A549 (cell line): ENCODE measurements at regions of chr7 and their contacts with region 1.

Region 1: DNA sequence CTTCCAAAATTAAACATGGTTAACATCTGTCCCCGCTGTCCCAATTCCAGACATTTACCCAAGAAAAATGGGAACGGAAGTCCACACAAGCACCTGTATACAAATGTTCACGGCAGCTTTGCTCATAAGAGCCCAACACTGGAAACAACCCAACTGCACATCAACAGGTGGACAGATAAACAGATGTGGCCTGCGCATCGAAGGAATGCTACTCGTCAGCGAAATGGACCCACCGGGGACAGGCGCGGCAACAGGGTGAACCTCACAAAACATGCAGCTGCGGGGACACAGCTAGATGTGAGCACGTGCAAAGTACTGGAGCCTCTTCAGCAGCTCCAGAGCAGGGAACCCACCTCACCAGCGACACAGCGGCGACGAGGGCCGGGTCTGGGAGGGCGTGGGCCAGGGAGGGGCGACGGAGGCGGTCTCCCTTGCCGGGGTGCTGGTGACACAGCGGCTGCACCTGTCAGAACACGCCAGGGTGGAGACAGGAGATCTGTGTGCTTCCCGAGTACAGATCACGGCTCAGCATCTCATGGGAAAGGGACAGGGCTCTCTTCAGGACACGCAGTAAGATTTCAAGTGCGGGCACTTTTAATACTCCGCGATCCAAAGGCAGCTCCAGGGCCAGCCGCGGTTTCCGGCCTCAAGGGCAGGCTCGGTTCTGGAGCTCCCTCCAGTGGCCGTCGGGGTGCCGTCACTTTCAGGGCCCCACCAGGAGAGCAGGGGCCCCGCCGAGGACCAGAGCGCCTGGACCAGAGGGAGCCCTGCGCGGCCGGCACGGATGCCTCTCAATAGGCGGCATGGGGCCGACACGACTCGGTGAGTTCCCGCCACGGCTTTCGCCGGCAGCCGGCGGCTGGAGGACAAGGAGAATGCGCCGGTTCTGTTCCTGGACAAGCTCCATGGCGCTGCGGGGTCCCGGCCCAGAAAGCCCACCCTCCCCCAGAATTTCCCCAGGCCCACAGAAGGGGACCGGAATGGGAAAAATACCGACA is 21.2 kb downstream of the GPR146 start:
- DNase-seq: peak; percentile 72 to 95
- ATAC-seq: peak; percentile 94 to 97
- H3K4me3 ChIP-seq: no peak overlapping the region
- H3K27ac ChIP-seq: no peak overlapping the region
- H3K4me1 ChIP-seq: peaks cover 4% of the 10 kb centered on the region; the same call in 1 of the 3 replicates
- CTCF ChIP-seq: peak; percentile 82
- EP300 ChIP-seq: no peak
- POLR2A ChIP-seq: no peak
- RAD21 ChIP-seq: peak; percentile 91 to 92

Region 2: DNA sequence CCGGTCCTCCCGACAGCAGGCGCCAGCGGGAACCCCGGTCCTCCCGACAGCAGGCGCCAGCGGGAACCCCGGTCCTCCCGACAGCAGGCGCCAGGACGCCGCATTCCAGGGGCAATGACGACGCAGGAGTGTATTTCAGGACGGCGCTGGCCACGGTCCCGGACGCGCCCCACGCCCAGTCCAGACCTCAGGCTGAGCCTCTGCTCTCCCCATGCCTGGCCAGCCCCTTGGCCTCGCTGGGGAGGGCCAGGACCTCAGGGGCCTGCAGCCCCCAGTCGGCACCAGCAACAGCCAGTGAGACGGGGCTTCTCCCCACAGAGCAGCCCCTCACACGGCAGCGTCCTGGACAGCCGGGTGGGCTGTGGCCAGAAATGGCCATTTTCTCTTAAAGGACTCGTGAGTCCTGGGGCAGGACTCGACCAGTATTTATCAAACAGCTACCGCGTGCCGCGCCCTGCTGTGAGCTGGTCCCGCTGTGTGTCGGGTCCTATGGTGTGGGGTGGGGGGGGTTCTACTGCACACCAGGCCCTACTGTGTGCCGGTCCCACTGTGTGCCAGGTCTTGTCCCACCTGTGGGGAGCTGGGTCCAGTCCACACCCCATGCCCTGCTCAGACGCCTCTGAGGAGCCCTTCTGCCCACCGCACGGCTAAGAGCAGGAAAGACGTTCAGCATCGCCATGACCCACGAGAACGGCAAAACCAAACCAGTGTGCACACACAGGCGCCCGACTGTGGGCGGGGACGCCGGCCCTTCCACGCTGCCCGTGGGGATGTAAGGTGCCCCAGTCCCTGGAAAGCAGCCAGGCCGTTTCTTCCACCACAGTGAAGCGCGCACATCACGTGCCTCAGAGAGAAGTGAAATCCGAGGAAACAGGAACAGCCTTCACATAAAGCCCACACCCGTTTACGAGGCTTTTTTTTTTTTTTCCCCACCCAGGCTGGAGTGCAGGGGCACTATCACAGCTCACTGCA is 155.9 kb before region 1 on chr7:
- CTCF ChIA-PET with region 1: interaction called, 20 read pairs
- POLR2A ChIA-PET with region 1: no interaction called
- DNase-seq: peak; percentile 42 to 50
- ATAC-seq: peak; percentile 36 to 69
- H3K4me3 ChIP-seq: peak overlapping the region; percentile 42
- H3K27ac ChIP-seq: peak overlapping the region; percentile 54 to 80; a peak in 5 of 6 replicates
- H3K4me1 ChIP-seq: peaks cover 15% of the 10 kb centered on the region
- CTCF ChIP-seq: no peak; the same call in 1 of the 3 replicates
- EP300 ChIP-seq: no peak
- POLR2A ChIP-seq: no peak
- RAD21 ChIP-seq: no peak

Region 3: GRCh38 chr7:974820-975681 is 90.5 kb before region 1 on chr7 and contains the start of gene COX19:
- CTCF ChIA-PET with region 1: interaction called, 25 read pairs
- POLR2A ChIA-PET with region 1: interaction called, 5 read pairs
- DNase-seq: peak; percentile 68 to 92
- ATAC-seq: peak; percentile 86 to 93
- H3K4me3 ChIP-seq: peak within 1 kb of the TSS; percentile 77
- H3K27ac ChIP-seq: peak within 1 kb of the TSS; percentile 81 to 96
- H3K4me1 ChIP-seq: peaks cover 24% of the 10 kb centered on the region
- CTCF ChIP-seq: no peak
- EP300 ChIP-seq: no peak
- POLR2A ChIP-seq: peak; percentile 68
- RAD21 ChIP-seq: no peak
- polyA plus RNA-seq, gene COX19: 5.4 and 7.6 TPM in 2 replicates

Region 4: DNA sequence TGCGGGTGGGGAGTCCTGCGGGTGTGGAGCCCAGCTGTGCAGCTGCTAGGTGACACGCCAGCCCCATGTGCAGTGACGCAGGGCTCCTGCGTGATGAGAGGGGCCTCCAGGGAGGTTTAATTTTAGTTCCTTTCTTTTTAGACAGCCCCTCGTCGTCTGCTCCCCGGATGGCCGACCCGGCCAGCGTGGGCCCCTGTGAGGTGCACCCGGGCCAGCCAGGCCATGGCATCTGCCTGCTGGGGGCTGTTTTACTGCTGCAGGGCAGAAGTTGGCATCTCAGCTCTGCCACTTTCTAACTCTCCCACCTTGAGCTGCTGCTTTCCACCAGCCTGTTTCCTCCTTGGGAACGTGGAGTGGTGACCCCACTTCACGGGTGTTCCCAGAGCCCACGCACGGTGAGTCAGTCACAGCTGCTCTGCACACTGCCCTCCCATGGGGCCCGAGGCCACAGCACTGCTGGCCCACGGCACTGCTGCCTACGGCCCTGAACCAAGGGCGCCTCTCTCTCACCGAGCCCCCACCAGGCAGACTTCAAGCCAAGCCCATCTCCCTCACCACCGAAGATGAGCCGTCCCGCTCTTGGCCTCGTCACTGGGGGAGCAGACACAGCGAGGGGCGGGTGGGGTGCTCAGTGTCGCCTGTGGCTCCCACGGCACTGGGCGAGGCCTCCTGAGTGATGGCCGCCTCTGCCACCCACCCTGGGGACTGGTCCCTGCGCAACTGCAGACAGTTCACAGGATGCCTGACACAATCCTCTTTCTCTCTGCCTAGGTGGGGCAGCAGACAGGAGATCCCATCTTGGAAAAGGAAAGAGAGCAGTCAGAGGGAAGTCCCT is 61.3 kb before region 1 on chr7:
- CTCF ChIA-PET with region 1: interaction called, 487 read pairs
- POLR2A ChIA-PET with region 1: no interaction called
- DNase-seq: no peak
- ATAC-seq: peak in 1 of 2 experiments; percentile 16; a peak in 1 of 6 replicates
- H3K4me3 ChIP-seq: no peak overlapping the region
- H3K27ac ChIP-seq: no peak overlapping the region
- H3K4me1 ChIP-seq: no peaks in the 10 kb centered on the region
- CTCF ChIP-seq: no peak
- EP300 ChIP-seq: no peak
- POLR2A ChIP-seq: no peak
- RAD21 ChIP-seq: no peak

Region 5: GRCh38 chr7:1033546-1034145 is 31.9 kb before region 1 on chr7:
- CTCF ChIA-PET with region 1: interaction called, 10 read pairs
- POLR2A ChIA-PET with region 1: no interaction called
- DNase-seq: no peak
- ATAC-seq: no peak
- H3K4me3 ChIP-seq: no peak overlapping the region
- H3K27ac ChIP-seq: no peak overlapping the region
- H3K4me1 ChIP-seq: peaks cover 10% of the 10 kb centered on the region
- CTCF ChIP-seq: no peak
- EP300 ChIP-seq: no peak
- POLR2A ChIP-seq: no peak
- RAD21 ChIP-seq: no peak

Region 6: GRCh38 chr7:1054861-1055450 is 10.6 kb before region 1 on chr7:
- CTCF ChIA-PET with region 1: interaction called, 63 read pairs
- POLR2A ChIA-PET with region 1: no interaction called
- DNase-seq: no peak
- ATAC-seq: no peak
- H3K4me3 ChIP-seq: no peak overlapping the region
- H3K27ac ChIP-seq: no peak overlapping the region
- H3K4me1 ChIP-seq: no peaks in the 10 kb centered on the region
- CTCF ChIP-seq: no peak
- EP300 ChIP-seq: no peak
- POLR2A ChIP-seq: no peak
- RAD21 ChIP-seq: no peak

Region 7: DNA sequence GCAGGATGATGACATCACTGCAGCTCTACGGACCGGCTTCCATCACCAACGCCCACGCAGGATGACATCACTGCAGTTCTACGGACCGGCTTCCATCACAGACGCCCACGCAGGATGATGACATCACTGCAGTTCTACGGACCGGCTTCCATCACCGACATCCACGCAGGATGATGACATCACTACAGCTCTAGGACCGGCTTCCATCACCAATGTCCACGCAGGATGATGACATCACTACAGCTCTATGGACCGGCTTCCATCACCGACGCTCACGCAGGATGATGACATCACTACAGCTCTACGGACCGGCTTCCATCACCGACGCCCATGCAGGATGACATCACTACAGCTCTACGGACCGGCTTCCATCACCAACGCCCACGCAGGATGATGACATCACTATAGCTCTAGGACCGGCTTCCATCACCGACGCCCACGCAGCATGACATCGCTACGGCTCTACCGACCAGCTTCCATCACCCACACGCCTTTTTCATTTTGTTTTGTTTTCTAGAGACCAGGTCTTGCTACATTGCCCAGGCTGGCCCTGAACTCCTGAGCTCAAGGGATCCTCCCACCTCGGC is 51.9 kb after region 1 on chr7:
- CTCF ChIA-PET with region 1: interaction called, 12 read pairs
- POLR2A ChIA-PET with region 1: no interaction called
- DNase-seq: no peak
- ATAC-seq: no peak
- H3K4me3 ChIP-seq: no peak overlapping the region
- H3K27ac ChIP-seq: no peak overlapping the region
- H3K4me1 ChIP-seq: no peaks in the 10 kb centered on the region
- CTCF ChIP-seq: no peak
- EP300 ChIP-seq: no peak
- POLR2A ChIP-seq: no peak
- RAD21 ChIP-seq: no peak

Region 8: GRCh38 chr7:1225441-1226185 is 160.1 kb after region 1 on chr7:
- CTCF ChIA-PET with region 1: no interaction called
- POLR2A ChIA-PET with region 1: no interaction called
- DNase-seq: peak in 1 of 2 experiments; percentile 72
- ATAC-seq: peak; percentile 54 to 87; a peak in 3 of 6 replicates
- H3K4me3 ChIP-seq: no peak overlapping the region
- H3K27ac ChIP-seq: no peak overlapping the region
- H3K4me1 ChIP-seq: 0 out of 3 replicates have a peak, but pooled peaks cover 3% of the 10 kb centered on the region
- CTCF ChIP-seq: peak; percentile 95
- EP300 ChIP-seq: no peak
- POLR2A ChIP-seq: no peak
- RAD21 ChIP-seq: peak; percentile 74 to 81

Region 9: DNA sequence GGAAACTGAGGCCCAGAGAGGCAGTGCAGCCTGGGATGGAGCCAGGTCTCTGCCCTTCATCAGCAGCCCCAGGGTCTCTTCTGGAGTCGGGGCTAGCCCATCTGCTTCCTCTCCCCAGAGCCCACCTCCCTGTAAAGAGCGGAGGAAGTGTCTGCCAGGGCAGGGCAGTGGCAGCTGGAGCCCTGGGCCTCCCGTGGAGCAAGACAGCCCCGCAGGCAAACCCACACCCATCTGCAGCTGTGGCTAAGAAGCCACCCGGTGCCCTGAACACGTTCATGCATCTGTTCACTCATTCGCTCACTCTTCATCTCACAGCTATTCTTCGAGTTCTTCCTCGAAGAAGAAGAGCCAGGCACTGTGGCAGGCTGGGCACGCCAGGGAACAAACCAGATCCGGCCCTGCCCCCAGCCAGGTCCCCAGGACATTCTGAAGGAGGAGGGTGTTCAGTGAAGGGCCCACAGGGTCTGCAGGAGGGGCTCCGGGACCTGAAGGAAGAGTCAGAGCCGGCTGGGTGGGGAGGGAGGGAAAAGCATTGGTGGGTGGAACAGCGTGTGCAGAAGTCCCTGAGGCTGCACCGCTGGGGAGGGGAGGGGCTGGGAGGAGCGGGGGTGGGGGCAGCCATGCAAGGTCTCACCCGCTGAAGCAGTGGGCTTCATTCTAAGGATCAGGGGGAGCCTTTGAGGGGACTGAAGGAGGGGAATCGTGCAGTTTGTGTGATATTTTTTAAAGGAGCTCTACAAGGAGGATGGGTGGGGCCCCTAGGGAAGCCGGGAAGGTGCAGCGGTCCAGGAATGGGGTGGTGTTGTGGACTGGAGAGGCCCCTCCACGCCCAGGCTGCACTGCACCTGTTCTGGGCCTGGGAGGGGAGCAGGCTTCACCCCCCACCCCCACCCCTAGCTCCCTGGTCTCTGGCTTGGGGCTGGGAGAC is 266.3 kb after region 1 on chr7:
- CTCF ChIA-PET with region 1: no interaction called
- POLR2A ChIA-PET with region 1: no interaction called
- DNase-seq: no peak
- ATAC-seq: peak; percentile 23 to 42; a peak in 3 of 6 replicates
- H3K4me3 ChIP-seq: no peak overlapping the region
- H3K27ac ChIP-seq: no peak overlapping the region
- H3K4me1 ChIP-seq: no peaks in the 10 kb centered on the region
- CTCF ChIP-seq: no peak
- EP300 ChIP-seq: no peak
- POLR2A ChIP-seq: no peak
- RAD21 ChIP-seq: no peak